MCF 10A (cell line): ENCODE measurements at regions of chr14 and their contacts with region 1.

Region 1: DNA sequence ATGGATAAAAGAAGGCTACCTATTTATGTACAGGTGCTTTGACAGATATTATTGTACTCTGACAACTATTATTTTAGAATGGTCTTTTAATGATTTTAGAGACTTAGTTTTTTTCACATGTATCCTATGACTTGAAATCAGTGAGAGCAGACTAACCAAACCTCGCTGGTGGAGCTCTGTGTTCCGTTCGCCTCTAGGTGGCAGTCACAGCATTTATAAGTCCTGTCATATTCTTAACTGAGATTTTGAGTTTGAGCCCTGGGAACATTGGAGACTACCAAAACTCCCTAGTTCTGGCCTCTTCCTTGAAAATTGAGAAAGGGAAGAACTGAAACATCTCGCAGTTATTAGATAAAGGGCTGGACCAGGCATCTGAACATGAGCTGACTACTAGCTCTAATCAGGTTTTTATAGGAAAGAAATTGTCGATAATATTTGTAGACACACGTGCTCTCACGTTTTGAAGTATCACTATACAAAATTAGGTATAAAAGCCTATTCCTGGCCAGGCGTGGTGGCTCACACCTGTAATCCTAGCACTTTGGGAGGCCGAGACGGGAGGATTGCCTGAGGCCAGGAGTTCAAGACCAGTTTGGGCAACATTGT is 48.3 kb downstream of the TTLL5 start:
- DNase-seq: peak; percentile 80
- H3K4me3 Mint-ChIP-seq: no peak overlapping the region
- H3K27ac Mint-ChIP-seq: no peak overlapping the region
- H3K4me1 Mint-ChIP-seq: peaks cover 20% of the 10 kb centered on the region
- H3K27me3 Mint-ChIP-seq: no peaks in the 10 kb centered on the region
- CTCF ChIP-seq: peak; percentile 62

Region 2: DNA sequence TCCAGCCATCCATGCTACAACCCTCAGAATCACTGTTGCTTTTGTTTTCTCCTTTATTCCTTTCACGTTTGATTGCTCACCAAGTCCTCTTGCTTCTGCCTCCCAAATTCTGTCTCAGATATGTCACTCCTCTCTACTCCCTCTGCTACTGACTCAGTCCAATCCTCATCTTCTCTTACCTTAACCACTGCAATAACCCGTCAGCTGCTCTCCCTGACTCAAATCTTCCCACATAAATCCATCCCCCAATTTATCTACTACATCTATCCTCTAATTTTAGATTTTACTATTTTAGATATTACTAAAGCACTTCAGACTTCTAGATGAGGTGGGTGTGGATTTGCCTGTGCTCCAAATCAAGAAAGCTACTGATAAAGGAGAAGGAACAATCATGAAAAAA is 683.4 kb before region 1 on chr14:
- CTCF ChIA-PET with region 1: no interaction called
- POLR2A ChIA-PET with region 1: no interaction called
- intact Hi-C with region 1: no loop called
- DNase-seq: no peak
- H3K4me3 Mint-ChIP-seq: no peak overlapping the region
- H3K27ac Mint-ChIP-seq: no peak overlapping the region
- H3K4me1 Mint-ChIP-seq: no peaks in the 10 kb centered on the region
- H3K27me3 Mint-ChIP-seq: no peaks in the 10 kb centered on the region
- CTCF ChIP-seq: no peak

Region 3: GRCh38 chr14:75242546-75243273 is 466.6 kb before region 1 on chr14:
- CTCF ChIA-PET with region 1: no interaction called
- POLR2A ChIA-PET with region 1: no interaction called
- intact Hi-C with region 1: no loop called
- DNase-seq: peak; percentile 95
- H3K4me3 Mint-ChIP-seq: peak overlapping the region; percentile 2
- H3K27ac Mint-ChIP-seq: peak overlapping the region; percentile 57
- H3K4me1 Mint-ChIP-seq: peaks cover 10% of the 10 kb centered on the region
- H3K27me3 Mint-ChIP-seq: no peaks in the 10 kb centered on the region
- CTCF ChIP-seq: no peak

Region 4: GRCh38 chr14:75660630-75661494 is 48.4 kb before region 1 on chr14 and contains the starts of genes ERG28 and TTLL5:
- CTCF ChIA-PET with region 1: interaction called, 5 read pairs
- POLR2A ChIA-PET with region 1: interaction called, 10 read pairs
- intact Hi-C with region 1: no loop called
- DNase-seq: peak; percentile 99
- H3K4me3 Mint-ChIP-seq: peak within 1 kb of the TSS; percentile 98
- H3K27ac Mint-ChIP-seq: peak within 1 kb of the TSS; percentile 97
- H3K4me1 Mint-ChIP-seq: peaks cover 17% of the 10 kb centered on the region
- H3K27me3 Mint-ChIP-seq: no peaks in the 10 kb centered on the region
- CTCF ChIP-seq: no peak
- total RNA-seq, gene ERG28: 10.4 and 11.1 TPM in 2 replicates
- total RNA-seq, gene TTLL5: 29.0 and 31.7 TPM in 2 replicates

Region 5: DNA sequence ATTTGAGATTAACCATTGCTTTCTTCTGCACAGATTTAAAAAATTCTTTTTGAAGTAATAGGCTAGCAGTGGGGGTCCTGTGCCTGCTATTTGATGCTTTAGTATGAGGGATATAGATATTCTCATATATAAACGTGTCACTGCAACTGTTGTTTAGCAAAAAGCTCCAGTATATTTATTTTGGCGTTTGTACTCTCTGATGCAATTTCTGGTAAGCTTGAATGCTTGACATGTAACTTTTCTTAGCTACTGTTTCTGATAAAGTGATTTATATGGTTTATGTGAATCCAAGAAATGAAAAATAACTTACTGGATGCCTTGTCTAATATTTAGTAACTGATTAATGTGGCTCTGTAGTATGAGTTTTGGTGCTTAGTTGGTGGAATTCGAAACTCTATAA is 28.9 kb after region 1 on chr14:
- CTCF ChIA-PET with region 1: interaction called, 10 read pairs
- POLR2A ChIA-PET with region 1: interaction called, 4 read pairs
- intact Hi-C with region 1: no loop called
- DNase-seq: peak; percentile 21
- H3K4me3 Mint-ChIP-seq: no peak overlapping the region
- H3K27ac Mint-ChIP-seq: peak overlapping the region; percentile 42
- H3K4me1 Mint-ChIP-seq: peaks cover 7% of the 10 kb centered on the region
- H3K27me3 Mint-ChIP-seq: no peaks in the 10 kb centered on the region
- CTCF ChIP-seq: no peak

Region 6: GRCh38 chr14:75906676-75907280 is 197.5 kb after region 1 on chr14:
- CTCF ChIA-PET with region 1: interaction called, 55 read pairs
- POLR2A ChIA-PET with region 1: interaction called, 6 read pairs
- intact Hi-C with region 1: loop called (anchors 5 kb)
- DNase-seq: peak; percentile 69
- H3K4me3 Mint-ChIP-seq: no peak overlapping the region
- H3K27ac Mint-ChIP-seq: no peak overlapping the region
- H3K4me1 Mint-ChIP-seq: peaks cover 11% of the 10 kb centered on the region
- H3K27me3 Mint-ChIP-seq: no peaks in the 10 kb centered on the region
- CTCF ChIP-seq: peak; percentile 70

Region 7: DNA sequence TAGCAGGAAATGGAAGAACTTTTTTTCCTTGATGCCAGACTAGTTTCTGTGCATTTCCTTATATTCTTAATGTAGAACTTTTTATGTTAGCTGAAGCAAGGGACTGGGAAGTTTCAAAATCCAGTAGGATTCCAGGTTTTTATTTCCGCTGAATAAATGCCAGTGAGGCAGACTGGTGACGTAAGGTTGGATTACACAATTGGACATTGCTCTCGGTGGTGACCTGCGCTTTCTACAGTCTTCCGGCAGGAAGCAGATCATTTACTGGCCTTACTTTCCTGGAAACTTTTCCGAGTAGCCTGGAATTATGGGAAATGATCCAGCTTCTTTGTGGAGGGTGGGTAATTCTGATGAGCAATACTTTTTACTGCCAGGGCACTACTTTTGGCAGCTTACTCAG is 279.8 kb after region 1 on chr14:
- CTCF ChIA-PET with region 1: interaction called, 205 read pairs
- POLR2A ChIA-PET with region 1: interaction called, 21 read pairs
- intact Hi-C with region 1: no loop called
- DNase-seq: peak; percentile 91
- H3K4me3 Mint-ChIP-seq: no peak overlapping the region
- H3K27ac Mint-ChIP-seq: no peak overlapping the region
- H3K4me1 Mint-ChIP-seq: peaks cover 10% of the 10 kb centered on the region
- H3K27me3 Mint-ChIP-seq: no peaks in the 10 kb centered on the region
- CTCF ChIP-seq: no peak

Region 8: GRCh38 chr14:76227448-76228050 is 518.2 kb after region 1 on chr14:
- CTCF ChIA-PET with region 1: no interaction called
- POLR2A ChIA-PET with region 1: no interaction called
- intact Hi-C with region 1: no loop called
- DNase-seq: peak; percentile 86
- H3K4me3 Mint-ChIP-seq: no peak overlapping the region
- H3K27ac Mint-ChIP-seq: no peak overlapping the region
- H3K4me1 Mint-ChIP-seq: peaks cover 8% of the 10 kb centered on the region
- H3K27me3 Mint-ChIP-seq: no peaks in the 10 kb centered on the region
- CTCF ChIP-seq: no peak

Region 9: GRCh38 chr14:76647697-76648298 is 938.5 kb after region 1 on chr14:
- CTCF ChIA-PET with region 1: interaction called, 3 read pairs
- POLR2A ChIA-PET with region 1: no interaction called
- intact Hi-C with region 1: loop called (anchors 10 kb)
- DNase-seq: peak; percentile 75
- H3K4me3 Mint-ChIP-seq: no peak overlapping the region
- H3K27ac Mint-ChIP-seq: no peak overlapping the region
- H3K4me1 Mint-ChIP-seq: no peaks in the 10 kb centered on the region
- H3K27me3 Mint-ChIP-seq: no peaks in the 10 kb centered on the region
- CTCF ChIP-seq: peak; percentile 70